Posterior vena cava (tissue), 2 donors: ENCODE measurements at regions of chr22 and their contacts with region 1.

Region 1: GRCh38 chr22:33380789-33381530 is 322.8 kb upstream of the SYN3 start:
- DNase-seq: no peak

Region 2: DNA sequence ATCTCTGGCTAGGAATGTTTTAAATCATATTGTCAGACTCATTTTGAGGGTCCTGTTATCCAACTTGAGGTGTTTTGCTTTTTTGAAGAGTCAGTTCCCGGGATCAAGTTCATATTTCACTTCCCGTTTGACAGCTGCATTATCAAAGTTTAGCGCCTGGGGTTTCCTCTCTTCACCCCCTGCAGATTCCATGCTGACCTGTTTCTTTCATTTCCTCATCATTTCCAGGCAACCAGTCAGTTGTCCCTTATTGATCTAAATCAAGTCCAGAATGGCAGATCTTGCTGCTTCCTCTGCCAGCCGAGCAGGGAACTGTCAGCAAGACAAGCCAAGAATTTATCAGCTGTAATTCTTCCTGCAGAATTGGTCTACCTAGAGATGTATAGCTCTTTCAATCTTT is 125.2 kb before region 1 on chr22:
- intact Hi-C with region 1: no loop called
- DNase-seq: no peak

Region 3: DNA sequence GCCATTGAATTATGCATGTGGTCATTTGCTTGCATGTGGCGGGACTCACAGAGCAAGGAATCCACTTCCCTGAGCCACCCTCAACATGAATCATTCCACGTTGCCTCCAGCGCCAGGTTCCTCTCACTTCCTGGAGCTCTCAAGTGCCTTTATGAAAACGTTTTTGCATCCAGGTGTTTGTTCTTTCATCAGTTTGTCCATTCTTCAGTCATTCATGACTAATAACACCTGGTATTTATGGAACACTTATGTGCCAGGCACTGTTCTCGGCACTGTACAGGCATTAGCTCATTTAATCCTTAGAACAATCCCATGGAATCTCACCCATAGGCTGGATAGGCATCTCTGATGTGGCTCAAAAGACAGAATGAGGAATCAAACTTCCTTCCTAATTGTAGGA is 66.6 kb before region 1 on chr22:
- intact Hi-C with region 1: loop called in 1 of 2 experiments (anchors 2 kb)
- DNase-seq: no peak